ENCODE measurements at regions of chr4 and their contacts with region 1.

Region 1: GRCh38 chr4:78119698-78120097 is 62.6 kb downstream of the FRAS1 start:
- DNase-seq: no peak
- ATAC-seq: no peak
- H3K4me3 ChIP-seq: no peak overlapping the region
- H3K27ac ChIP-seq: no peak overlapping the region
- H3K4me1 ChIP-seq: peaks cover 0 to 12% (median 1%) of the 10 kb centered on the region in 12 donors
- H3K27me3 ChIP-seq: no peaks in the 10 kb centered on the region
- CTCF ChIP-seq: no peak
- POLR2A ChIP-seq: no peak

Region 2: GRCh38 chr4:77251751-77252150 is 867.9 kb before region 1 on chr4:
- intact Hi-C with region 1: loop called in 1 of 10 experiments (anchors 10 kb)
- DNase-seq: no peak
- ATAC-seq: no peak
- H3K4me3 ChIP-seq: no peak overlapping the region
- H3K27ac ChIP-seq: no peak overlapping the region
- H3K4me1 ChIP-seq: no peaks in the 10 kb centered on the region
- H3K27me3 ChIP-seq: no peaks in the 10 kb centered on the region
- CTCF ChIP-seq: no peak
- POLR2A ChIP-seq: no peak

Measured in heart left ventricle (tissue), 16 donors.